T-cell (primary cell): ENCODE measurements at regions of chr4 and their contacts with region 1.

Region 1: DNA sequence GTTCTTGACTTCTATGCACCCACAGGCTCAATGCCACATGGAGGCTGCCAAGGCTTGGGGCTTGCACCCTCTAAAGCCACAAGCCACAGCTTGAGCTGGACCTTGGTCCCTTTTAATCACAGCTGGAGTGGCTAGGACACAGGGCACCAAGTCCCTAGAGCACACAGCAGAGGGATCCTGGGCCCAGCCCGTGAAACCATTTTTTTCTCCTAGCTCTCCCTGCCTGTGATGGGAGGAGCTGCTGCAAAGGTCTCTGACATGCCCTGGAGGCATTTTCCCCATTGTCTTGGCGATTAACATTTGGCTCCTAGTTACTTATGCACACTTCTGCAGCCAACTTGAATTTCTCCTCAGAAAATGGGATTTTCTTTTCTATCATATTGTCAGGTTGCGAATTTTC is 410.9 kb downstream of the GRID2 start:
- DNase-seq: no peak
- ATAC-seq: no peak
- H3K4me3 ChIP-seq: no peak overlapping the region
- H3K4me3 Mint-ChIP-seq: no peak overlapping the region
- H3K27ac ChIP-seq: no peak overlapping the region
- H3K27ac Mint-ChIP-seq: no peak overlapping the region
- H3K4me1 ChIP-seq: no peaks in the 10 kb centered on the region
- H3K4me1 Mint-ChIP-seq: no peaks in the 10 kb centered on the region
- H3K27me3 ChIP-seq: no peaks in the 10 kb centered on the region
- H3K27me3 Mint-ChIP-seq: no peaks in the 10 kb centered on the region

Region 2: GRCh38 chr4:92812652-92813051 is 98.0 kb after region 1 on chr4:
- CTCF ChIA-PET with region 1: no interaction called
- POLR2A ChIA-PET with region 1: interaction called in 1 of 2 experiments, 11 read pairs
- DNase-seq: no peak
- ATAC-seq: no peak
- H3K4me3 ChIP-seq: no peak overlapping the region
- H3K4me3 Mint-ChIP-seq: no peak overlapping the region
- H3K27ac ChIP-seq: no peak overlapping the region
- H3K27ac Mint-ChIP-seq: no peak overlapping the region
- H3K4me1 ChIP-seq: no peaks in the 10 kb centered on the region
- H3K4me1 Mint-ChIP-seq: no peaks in the 10 kb centered on the region
- H3K27me3 ChIP-seq: no peaks in the 10 kb centered on the region
- H3K27me3 Mint-ChIP-seq: no peaks in the 10 kb centered on the region